ENCODE measurements at regions of chr10 and their contacts with region 1.

Region 1: DNA sequence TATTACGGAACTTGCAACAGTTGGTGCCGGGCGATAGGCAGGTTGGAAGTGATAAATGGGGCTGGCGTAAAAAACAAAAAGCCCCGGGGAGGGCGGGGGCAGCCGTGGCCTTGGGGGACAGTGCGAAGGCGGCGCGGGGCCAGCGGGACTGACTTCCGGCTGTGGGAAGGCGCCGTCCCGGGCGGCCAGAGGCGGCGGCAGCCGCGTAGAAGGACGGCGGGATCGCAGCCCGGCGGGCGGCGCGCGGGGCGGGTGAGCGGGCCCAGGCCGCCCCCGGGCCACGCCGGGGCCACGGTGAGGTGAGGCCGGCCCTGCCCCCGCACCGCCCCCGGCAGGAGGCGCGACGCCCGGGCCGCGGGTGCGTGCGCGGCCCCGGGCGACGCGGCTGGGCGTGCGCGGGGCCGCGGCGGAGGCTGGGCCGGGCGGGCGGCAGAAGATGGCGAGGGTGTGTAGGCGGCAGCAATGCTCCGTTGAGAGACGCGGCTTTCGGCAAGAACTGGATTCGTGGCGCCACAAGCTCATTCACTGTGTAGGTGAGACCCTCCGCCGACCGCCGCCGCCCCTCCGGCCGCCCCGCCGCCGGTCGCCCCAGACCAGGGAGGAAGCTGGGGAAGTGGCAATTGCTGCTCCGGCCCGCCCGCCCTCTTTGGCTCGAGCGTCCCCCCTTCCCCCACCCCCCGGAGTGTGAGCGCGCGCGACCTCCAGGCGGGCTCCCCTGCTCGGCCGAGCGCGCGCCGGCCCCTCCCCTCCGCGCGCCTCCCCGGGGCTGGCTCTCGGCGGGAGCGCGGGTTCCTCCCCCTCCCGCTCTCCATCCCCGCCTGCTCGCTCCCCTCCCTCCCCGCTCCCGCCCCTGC is at the start of gene LCOR:
- DNase-seq: peak; percentile 91 to 94
- ATAC-seq: peak; percentile 95
- H3K4me3 ChIP-seq: peak within 1 kb of the TSS; percentile 91 to 95
- H3K27ac ChIP-seq: peak within 1 kb of the TSS; percentile 2 to 83
- H3K4me1 ChIP-seq: peaks cover 0 to 9% of the 10 kb centered on the region in 2 donors
- H3K27me3 ChIP-seq: no peaks in the 10 kb centered on the region
- total RNA-seq, gene LCOR: 36.4 to 38.9 TPM

Region 2: DNA sequence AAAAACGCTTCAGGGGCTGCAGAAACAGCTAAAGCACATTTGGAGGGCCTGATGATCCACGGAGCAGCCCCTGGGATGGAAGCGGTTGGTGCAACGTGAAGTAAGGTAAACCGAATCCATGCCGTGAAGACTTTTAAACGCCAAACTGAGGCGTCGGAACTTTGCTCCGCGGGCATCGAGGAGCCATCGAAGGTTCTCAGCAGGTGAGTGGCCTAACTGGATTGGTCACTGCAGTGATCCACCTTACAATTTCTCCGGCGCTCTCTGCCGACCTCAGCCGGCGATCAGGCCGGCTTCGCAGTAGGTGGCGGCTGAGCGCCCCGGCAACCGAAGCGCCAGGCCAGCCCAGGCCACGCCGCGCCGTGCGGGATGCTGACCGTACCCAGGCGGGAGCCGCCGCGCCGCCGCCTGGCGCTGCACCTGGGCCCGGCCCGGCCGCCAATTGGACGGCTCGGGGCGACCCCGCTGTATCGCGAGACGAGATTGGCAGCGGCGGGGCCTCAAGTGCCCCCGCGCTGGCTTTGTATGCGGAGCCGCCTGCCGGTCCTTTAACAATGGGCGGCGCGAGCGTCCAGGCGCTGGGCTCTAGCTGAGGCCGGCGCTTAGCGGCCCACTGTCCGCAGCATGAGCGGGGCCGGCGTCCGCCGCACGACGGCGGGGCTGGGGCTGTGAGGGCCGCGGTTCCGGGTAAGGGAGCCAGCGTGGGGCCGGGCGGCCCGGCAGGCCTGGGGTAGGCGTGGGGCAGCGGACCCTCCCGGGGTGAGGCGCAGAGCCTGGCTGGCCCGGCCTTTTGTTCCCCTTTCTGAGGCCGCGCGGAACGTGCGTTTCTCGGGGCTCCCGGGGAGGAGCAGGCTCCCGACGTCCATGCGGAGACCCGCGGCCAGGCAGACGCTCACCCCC is 788.8 kb before region 1 on chr10 and contains the start of gene CCNJ:
- intact Hi-C with region 1: loop called in 1 of 2 experiments (anchors 5 kb)
- DNase-seq: peak; percentile 92 to 96
- ATAC-seq: peak; percentile 94
- H3K4me3 ChIP-seq: peak within 1 kb of the TSS; percentile 75 to 78
- H3K27ac ChIP-seq: peak within 1 kb of the TSS; percentile 38 to 61
- H3K4me1 ChIP-seq: peaks cover 0 to 2% of the 10 kb centered on the region in 2 donors
- H3K27me3 ChIP-seq: no peaks in the 10 kb centered on the region
- total RNA-seq, gene CCNJ: 5.6 to 6.5 TPM

Region 3: DNA sequence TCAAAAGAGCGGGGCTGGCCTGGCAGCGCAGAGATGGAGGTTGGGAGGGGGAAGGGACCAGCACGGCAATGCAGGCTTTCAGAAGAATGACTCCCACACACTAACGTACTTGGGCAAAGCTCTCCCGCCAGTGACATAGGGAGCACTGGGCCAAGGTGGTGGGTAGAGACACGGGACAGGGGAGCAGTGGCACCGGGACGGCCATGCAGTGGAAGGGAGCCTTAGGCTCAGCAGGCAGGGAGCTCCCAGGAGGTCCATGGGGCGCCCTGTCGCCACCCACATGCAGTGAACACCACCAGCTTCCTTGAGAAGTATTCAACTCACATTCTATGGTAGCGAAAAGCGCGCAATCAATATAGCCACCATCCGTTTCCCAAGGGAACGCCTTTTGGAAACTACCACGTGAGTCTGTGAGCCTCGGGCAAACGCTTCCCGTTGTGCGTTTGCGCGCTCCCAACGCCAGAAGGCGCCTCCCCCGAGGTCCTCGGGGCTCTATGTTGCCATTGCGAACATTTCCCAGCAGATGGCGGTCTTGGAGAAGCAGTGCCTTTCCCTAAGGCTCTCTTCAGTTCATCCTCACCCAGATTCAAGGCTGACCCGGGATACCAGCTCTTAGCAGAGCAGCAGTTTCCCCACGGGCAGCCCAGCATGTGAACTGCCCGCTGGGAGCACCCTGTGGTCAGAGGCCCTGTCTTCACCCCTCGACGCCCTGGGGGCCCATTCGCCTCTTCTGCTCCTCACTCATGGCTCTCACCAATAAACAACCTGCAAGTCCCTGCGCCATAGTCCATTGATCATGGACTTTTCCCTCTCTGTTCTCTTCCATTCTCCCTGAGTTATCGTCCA is 456.9 kb before region 1 on chr10:
- intact Hi-C with region 1: loop called in 1 of 2 experiments (anchors 10 kb)
- DNase-seq: peak; percentile 87 to 93
- ATAC-seq: peak; percentile 93
- H3K4me3 ChIP-seq: no peak overlapping the region
- H3K27ac ChIP-seq: no peak overlapping the region
- H3K4me1 ChIP-seq: no peaks in the 10 kb centered on the region
- H3K27me3 ChIP-seq: no peaks in the 10 kb centered on the region

Region 4: DNA sequence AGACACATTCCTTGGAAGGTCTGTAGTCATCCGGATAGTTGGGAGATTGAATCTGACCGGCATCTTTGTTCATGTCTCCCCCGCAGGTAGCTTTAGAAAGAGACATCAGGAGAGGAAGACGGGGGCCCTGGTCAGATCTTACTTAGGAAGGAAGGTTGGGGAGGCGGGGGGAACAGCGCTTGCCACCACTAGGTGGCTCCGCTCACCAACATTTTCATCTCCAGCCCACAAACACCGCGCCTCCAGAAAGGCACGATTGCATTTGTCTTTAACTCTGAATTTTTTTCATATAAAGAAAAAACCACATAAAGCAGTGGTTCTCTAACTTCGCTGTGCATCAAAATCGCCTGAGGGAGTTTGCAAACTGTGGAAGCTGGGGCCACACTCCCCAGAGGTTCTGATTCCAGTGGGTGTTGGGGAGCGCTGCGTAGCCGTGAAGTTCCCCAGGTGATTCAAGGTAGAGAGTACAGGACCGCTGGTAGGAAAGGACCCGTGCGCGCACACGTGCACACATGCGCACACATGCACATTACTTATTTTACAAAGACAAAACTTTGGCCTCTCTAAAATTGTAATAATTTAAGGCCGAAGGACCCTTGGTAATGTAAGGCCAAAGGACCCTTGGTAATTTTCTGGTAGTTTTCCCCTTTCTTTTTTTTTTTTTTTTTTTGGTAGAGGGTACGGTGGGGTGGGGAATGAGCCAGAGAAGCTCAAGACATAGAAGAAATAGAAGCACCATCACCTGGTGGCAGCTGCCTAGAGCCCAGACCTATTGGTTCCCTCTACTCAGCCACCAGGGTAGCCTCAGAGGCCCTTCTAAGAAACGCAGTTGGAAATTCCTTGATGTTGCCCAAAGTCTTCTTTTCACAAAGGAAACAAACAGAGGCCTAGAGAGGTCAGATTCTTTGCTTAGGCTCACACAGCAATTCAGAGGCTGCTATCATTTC is 435.9 kb before region 1 on chr10:
- intact Hi-C with region 1: loop called in 1 of 2 experiments (anchors 10 kb)
- DNase-seq: peak; percentile 75 to 83
- ATAC-seq: peak; percentile 69
- H3K4me3 ChIP-seq: no peak overlapping the region
- H3K27ac ChIP-seq: no peak overlapping the region
- H3K4me1 ChIP-seq: no peaks in the 10 kb centered on the region
- H3K27me3 ChIP-seq: no peaks in the 10 kb centered on the region

Region 5: GRCh38 chr10:96586419-96587263 is 245.5 kb before region 1 on chr10 and contains the start of gene TM9SF3:
- intact Hi-C with region 1: loop called (anchors 5 to 10 kb)
- DNase-seq: peak; percentile 97 to 98
- ATAC-seq: peak; percentile 95
- H3K4me3 ChIP-seq: peak within 1 kb of the TSS; percentile 70 to 95
- H3K27ac ChIP-seq: peak within 1 kb of the TSS; percentile 93 to 99
- H3K4me1 ChIP-seq: peaks cover 0 to 3% of the 10 kb centered on the region in 2 donors
- H3K27me3 ChIP-seq: no peaks in the 10 kb centered on the region
- total RNA-seq, gene TM9SF3: 120 to 137 TPM

Region 6: GRCh38 chr10:96922978-96923948 is 91.2 kb after region 1 on chr10:
- intact Hi-C with region 1: no loop called
- DNase-seq: no peak
- ATAC-seq: no peak
- H3K4me3 ChIP-seq: no peak overlapping the region
- H3K27ac ChIP-seq: peak overlapping the region in 1 of 2 donors; percentile 36
- H3K4me1 ChIP-seq: no peaks in the 10 kb centered on the region
- H3K27me3 ChIP-seq: no peaks in the 10 kb centered on the region

Region 7: DNA sequence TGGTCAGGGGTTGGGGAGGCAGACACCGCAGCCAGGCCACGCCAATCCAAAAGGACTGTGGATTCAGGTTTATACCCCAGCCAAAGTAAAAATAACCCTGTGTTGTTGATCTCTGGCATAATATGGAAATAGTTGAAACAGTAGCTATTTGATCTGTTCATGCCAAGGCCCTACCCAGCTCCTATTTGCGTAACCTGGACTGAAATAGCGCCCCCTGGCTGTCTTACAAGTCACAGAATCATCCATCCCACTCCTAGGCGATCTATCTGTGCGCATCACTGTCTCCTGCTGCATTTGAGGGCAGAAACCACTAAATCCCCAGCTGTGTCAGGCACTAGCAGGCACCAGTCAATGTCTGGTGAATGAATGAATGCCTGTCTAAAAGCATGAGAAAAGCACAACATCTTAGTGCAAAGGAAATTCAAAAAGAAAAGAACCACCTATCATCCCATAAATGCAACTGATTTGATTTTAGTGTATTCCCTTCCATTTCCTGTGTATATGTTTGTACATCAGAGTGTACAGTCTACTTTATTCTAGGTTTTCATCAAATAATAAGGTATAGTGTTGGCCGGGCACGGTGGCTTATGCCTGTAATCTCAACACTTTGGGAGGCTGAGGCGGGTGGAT is 193.6 kb after region 1 on chr10:
- intact Hi-C with region 1: loop called (anchors 2 to 10 kb)
- DNase-seq: peak; percentile 55 to 73
- ATAC-seq: peak; percentile 53
- H3K4me3 ChIP-seq: no peak overlapping the region
- H3K27ac ChIP-seq: peak overlapping the region in 1 of 2 donors; percentile 69
- H3K4me1 ChIP-seq: no peaks in the 10 kb centered on the region
- H3K27me3 ChIP-seq: no peaks in the 10 kb centered on the region

Measured in aorta (tissue), 5 donors.